Dorsolateral prefrontal cortex (tissue), 120 donors: ENCODE measurements at regions of chr20 and their contacts with region 1.

Region 1: GRCh38 chr20:17315407-17316231 is 88.8 kb downstream of the PCSK2 start:
- DNase-seq: peak in 1 of 10 donors; percentile 23
- H3K4me3 ChIP-seq: peak overlapping the region in 26 of 59 donors; percentile 0 to 51 (median 24)
- H3K27ac ChIP-seq: peak overlapping the region in 7 of 59 donors; percentile 2 to 44 (median 23)
- H3K27me3 ChIP-seq: peaks cover 0 to 47% (median 5%) of the 10 kb centered on the region in 45 donors
- CTCF ChIP-seq: no peak

Region 2: DNA sequence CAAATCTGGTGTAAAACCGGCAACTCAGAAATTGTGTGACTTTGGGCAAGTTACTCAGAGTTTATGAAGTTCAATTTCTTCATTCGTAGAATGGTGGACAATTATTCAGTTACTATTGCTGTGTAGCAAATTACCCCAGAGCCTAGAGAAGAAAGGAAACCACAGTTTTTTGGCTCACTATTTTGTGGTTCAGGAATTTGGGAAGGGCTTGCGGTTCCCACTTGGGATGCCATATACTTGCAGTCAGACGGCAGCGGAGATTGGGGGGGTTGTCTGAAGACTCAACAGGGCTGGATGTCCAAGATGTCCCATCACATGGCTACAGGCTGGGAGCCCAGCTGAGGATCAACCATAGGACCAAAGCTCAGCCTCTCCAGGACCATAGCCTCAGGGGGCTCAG is 19.3 kb after region 1 on chr20:
- intact Hi-C with region 1: loop called in 1 of 2 experiments (anchors 2 kb)
- DNase-seq: no peak
- H3K4me3 ChIP-seq: no peak overlapping the region
- H3K27ac ChIP-seq: no peak overlapping the region
- H3K27me3 ChIP-seq: no peaks in the 10 kb centered on the region
- CTCF ChIP-seq: no peak